ENCODE measurements at regions of chr7 and their contacts with region 1.

Region 1: DNA sequence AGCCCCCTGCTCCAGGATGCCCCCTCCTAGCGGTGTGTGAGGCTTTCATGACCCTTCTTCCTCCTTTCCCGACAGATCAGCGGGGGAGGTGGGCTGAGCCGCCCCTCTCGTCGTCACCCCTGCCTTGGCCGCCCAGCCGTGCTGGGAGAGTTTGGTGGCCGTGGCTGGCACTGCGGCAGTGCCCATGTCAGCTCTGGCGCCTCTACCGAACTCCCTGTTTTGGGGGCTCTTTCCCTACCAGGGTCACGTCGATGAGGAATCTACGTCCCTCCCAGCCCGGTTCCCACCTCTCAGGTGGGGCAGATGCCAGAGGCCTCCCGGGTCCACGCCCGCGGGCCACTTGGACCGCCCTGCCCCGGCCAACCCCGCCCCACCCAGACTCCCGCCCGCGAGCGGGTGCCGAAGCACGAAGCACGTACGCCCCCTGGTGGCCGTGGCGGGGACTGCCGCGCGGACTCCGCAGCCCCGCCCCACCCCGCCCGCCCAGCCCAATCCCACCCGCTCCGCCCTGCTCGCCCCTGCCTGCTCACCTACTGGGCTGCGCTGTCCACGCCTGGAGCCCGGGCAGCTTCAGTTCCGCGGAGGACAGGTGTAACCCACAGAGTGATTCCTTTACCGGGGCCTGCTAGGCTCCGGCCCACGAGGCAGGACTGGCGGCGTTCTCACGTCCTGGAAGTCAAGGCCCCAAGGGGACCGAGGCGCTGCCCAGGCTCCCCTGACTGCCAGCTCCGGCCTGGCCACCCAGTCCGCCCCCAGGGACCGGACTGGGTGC is 127.1 kb downstream of the UBE2H start:
- DNase-seq: peak; percentile 66 to 81 (median 79)
- H3K4me3 ChIP-seq: peak overlapping the region; percentile 53 to 84 (median 75)
- H3K27ac ChIP-seq: no peak overlapping the region
- H3K4me1 ChIP-seq: peaks cover 0 to 20% (median 16%) of the 10 kb centered on the region in 4 experiments
- H3K27me3 ChIP-seq: peaks cover 0 to 3% (median 0%) of the 10 kb centered on the region in 5 experiments

Region 2: DNA sequence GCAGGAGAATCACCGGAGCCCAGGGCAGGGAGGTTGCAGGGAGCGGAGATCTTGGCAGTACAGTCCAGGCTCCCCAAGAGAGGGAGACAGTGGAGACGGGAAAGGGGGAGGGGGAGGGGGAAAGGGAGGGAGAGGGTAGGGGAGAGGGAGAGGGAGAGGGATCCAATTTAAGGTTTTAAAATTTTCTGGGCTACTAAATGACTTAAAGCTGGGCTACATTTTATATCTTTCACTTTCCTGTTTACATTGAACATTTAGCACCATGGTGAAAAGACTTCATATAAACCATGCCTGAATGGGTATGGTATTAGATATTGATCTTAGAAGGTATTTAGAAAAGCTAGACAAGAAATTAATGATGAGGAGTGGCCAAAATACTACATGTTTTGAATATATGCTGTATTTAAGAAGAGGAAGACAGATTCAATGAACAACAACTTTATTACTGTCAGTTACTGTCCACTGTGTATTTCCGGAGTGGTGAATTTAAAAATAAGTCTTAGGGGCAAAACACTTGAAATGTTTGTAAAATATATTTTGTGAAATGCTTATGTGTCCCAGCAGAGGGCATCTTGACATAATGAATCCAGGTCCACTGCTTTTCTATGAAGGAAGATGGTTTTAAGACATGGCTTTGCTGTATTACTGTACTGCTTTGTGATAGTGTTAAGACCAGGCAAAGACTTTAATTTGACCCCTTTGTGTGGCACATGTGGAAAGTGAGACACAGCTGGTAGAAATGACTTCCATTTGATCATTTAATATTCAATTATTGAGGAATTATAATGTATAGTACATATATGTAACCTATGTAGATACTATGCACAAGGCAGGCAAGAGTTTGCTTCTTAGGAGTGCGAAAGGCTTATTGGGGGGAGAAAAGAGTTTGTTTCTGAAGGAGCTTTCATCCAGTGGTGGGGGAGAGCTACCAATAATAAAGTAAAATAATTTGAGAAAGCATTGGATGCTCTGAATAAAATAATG is 161.4 kb before region 1 on chr7:
- CTCF ChIA-PET with region 1: interaction called, 39 read pairs
- POLR2A ChIA-PET with region 1: no interaction called
- DNase-seq: peak; percentile 66 to 84 (median 80)
- H3K4me3 ChIP-seq: no peak overlapping the region
- H3K27ac ChIP-seq: no peak overlapping the region
- H3K4me1 ChIP-seq: peaks cover 0 to 9% (median 6%) of the 10 kb centered on the region in 4 experiments
- H3K27me3 ChIP-seq: no peaks in the 10 kb centered on the region

Region 3: GRCh38 chr7:129840757-129841156 is 15.1 kb after region 1 on chr7:
- CTCF ChIA-PET with region 1: interaction called, 38 read pairs
- POLR2A ChIA-PET with region 1: no interaction called
- DNase-seq: no peak
- H3K4me3 ChIP-seq: no peak overlapping the region
- H3K27ac ChIP-seq: no peak overlapping the region
- H3K4me1 ChIP-seq: peaks cover 13 to 35% (median 16%) of the 10 kb centered on the region in 4 experiments
- H3K27me3 ChIP-seq: no peaks in the 10 kb centered on the region

Region 4: GRCh38 chr7:129948877-129949291 is 123.2 kb after region 1 on chr7:
- CTCF ChIA-PET with region 1: no interaction called
- POLR2A ChIA-PET with region 1: no interaction called
- DNase-seq: peak; percentile 87 to 96 (median 95)
- H3K4me3 ChIP-seq: peak overlapping the region; percentile 16 to 97 (median 97)
- H3K27ac ChIP-seq: peak overlapping the region; percentile 57 to 91
- H3K4me1 ChIP-seq: peaks cover 29 to 60% (median 47%) of the 10 kb centered on the region in 4 experiments
- H3K27me3 ChIP-seq: no peaks in the 10 kb centered on the region

Measured in common myeloid progenitor, CD34-positive (primary cell).